ENCODE measurements at regions of chr14 and their contacts with region 1.

Region 1: DNA sequence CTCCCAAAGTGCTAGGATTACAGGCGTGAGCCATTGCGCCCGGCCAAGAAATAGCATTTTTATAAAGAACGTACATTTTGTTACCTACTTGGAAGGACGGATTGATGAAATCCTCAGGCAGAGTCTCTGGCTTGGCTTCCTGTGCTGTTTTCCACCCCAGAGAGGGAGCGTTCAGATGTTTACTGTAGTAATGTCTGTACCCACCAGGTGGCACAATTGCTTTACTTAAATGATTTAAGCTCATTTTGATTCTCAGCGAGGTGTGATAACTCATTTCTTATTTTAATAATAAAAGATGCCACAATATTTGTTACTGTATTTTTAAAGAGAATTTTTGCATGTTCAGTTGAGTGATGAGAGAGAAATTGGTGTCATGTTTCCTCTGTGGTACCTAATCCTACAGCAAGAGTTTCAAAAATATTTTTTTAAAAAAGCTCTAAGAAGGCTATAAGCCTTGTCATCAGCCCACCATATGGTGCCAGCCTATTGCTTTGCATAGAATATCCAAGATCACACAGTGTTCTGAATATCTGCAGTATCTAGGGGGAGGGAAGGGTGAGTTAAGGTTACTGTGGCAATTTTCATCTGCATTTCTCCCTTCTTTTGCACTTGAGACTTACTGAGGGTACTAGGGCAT is 82.6 kb upstream of the TRAF3 start:
- DNase-seq: peak; percentile 77
- ATAC-seq: no peak
- H3K4me3 Mint-ChIP-seq: no peak overlapping the region
- H3K27ac Mint-ChIP-seq: no peak overlapping the region
- H3K4me1 Mint-ChIP-seq: peaks cover 14% of the 10 kb centered on the region
- H3K27me3 Mint-ChIP-seq: no peaks in the 10 kb centered on the region

Region 2: DNA sequence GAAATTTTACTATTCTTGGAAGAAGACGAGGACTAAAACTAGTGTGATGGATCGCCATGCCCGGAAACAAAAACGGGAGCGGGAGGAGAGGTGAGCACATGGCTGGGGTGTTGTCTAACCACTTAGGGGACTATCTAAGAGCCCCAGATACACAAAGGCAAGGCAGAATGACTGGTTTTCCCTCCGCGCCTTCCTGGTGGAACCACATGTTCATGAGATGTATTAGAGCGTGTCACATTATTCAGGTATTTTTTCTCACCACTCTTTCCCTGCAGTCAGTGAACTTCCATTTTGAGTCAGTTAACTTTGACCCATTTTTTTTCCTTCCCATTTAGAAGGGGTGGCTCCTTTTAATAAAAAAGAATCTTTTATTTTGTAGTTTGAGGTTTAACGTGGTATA is 13.8 kb after region 1 on chr14:
- CTCF ChIA-PET with region 1: interaction called, 18 read pairs
- POLR2A ChIA-PET with region 1: interaction called, 3 read pairs
- DNase-seq: no peak
- ATAC-seq: no peak
- H3K4me3 Mint-ChIP-seq: no peak overlapping the region
- H3K27ac Mint-ChIP-seq: no peak overlapping the region
- H3K4me1 Mint-ChIP-seq: no peaks in the 10 kb centered on the region
- H3K27me3 Mint-ChIP-seq: no peaks in the 10 kb centered on the region

Region 3: GRCh38 chr14:102759456-102760187 is 65.0 kb after region 1 on chr14:
- CTCF ChIA-PET with region 1: interaction called, 12 read pairs
- POLR2A ChIA-PET with region 1: no interaction called
- DNase-seq: no peak
- ATAC-seq: no peak
- H3K4me3 Mint-ChIP-seq: no peak overlapping the region
- H3K27ac Mint-ChIP-seq: no peak overlapping the region
- H3K4me1 Mint-ChIP-seq: no peaks in the 10 kb centered on the region
- H3K27me3 Mint-ChIP-seq: no peaks in the 10 kb centered on the region

Region 4: DNA sequence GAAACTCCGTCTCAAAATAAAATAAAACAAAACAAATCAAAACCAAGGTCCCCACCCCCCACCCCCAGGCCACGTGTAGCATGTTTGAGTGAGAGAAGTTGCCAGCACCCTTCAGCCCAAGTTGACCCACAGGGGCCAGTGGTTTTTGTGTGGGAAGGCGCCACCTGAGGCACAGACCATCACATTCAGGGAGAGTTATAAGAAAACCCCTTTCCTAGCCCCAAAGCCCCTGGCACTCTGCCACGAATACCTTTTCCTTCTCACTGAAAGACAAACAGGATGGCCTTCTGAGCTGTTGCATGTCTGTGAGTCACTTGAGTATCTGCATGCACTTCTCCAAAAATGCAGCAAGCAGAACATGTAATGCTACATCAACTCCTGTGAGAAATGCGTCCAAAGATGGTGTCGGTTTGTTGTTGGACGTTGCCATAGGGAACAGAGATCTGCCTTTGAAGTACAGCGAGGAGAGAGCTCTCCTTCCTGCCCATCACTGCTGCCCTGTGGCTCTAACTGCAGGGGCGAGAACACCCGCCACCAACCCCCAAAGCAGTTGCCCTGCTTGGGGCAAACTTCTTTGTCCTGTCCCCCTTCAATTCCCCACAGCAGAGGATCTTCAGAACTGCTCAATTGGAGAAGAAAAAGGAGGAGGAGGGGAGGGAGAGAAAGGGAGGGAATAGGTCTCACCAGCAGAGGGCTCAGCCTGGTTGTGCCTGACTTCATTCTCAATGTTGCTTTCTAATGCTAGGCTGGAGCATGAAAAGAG is 79.9 kb after region 1 on chr14:
- CTCF ChIA-PET with region 1: interaction called, 20 read pairs
- POLR2A ChIA-PET with region 1: interaction called, 3 read pairs
- DNase-seq: peak; percentile 73
- ATAC-seq: peak; percentile 45
- H3K4me3 Mint-ChIP-seq: no peak overlapping the region
- H3K27ac Mint-ChIP-seq: peak overlapping the region; percentile 71
- H3K4me1 Mint-ChIP-seq: peaks cover 36% of the 10 kb centered on the region
- H3K27me3 Mint-ChIP-seq: no peaks in the 10 kb centered on the region

Region 5: DNA sequence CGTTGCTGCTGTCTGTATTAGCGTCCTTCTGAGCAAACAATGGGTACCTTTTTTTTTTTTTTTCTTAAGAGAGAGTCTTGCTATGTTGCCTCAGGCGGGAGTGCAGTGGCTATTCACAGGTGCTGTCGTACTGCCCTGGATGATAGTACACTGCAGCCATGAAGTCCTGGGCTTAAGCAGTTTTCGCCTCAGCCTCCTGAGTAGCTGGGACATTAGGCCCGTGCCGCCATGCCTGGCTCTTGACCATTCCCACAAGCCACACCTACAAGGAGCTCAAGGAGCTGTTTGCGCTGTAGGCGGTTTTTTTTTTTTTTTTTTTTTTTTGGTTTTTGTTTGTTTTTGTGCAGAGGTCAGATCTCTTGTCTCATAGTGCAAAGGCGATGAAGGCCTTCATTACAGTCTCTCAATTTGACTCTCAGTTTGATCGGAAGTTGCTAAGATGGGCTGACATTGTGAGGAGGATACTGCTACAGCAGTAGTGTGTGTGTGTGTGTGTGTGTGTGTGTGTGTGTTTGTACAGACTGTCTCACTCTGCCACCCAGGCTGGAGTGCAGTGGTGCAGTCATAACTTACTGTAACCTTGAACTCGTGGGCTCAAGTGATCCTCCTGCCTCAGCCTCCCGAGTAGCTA is 116.7 kb after region 1 on chr14:
- CTCF ChIA-PET with region 1: no interaction called
- POLR2A ChIA-PET with region 1: no interaction called
- DNase-seq: no peak
- ATAC-seq: no peak
- H3K4me3 Mint-ChIP-seq: no peak overlapping the region
- H3K27ac Mint-ChIP-seq: no peak overlapping the region
- H3K4me1 Mint-ChIP-seq: peaks cover 52% of the 10 kb centered on the region
- H3K27me3 Mint-ChIP-seq: no peaks in the 10 kb centered on the region

Region 6: GRCh38 chr14:102917469-102918211 is 223.0 kb after region 1 on chr14:
- CTCF ChIA-PET with region 1: interaction called, 30 read pairs
- POLR2A ChIA-PET with region 1: no interaction called
- DNase-seq: peak; percentile 77
- ATAC-seq: peak; percentile 50
- H3K4me3 Mint-ChIP-seq: no peak overlapping the region
- H3K27ac Mint-ChIP-seq: peak overlapping the region; percentile 56
- H3K4me1 Mint-ChIP-seq: peaks cover 9% of the 10 kb centered on the region
- H3K27me3 Mint-ChIP-seq: no peaks in the 10 kb centered on the region